ENCODE measurements at regions of chr5 and their contacts with region 1.

Region 1: DNA sequence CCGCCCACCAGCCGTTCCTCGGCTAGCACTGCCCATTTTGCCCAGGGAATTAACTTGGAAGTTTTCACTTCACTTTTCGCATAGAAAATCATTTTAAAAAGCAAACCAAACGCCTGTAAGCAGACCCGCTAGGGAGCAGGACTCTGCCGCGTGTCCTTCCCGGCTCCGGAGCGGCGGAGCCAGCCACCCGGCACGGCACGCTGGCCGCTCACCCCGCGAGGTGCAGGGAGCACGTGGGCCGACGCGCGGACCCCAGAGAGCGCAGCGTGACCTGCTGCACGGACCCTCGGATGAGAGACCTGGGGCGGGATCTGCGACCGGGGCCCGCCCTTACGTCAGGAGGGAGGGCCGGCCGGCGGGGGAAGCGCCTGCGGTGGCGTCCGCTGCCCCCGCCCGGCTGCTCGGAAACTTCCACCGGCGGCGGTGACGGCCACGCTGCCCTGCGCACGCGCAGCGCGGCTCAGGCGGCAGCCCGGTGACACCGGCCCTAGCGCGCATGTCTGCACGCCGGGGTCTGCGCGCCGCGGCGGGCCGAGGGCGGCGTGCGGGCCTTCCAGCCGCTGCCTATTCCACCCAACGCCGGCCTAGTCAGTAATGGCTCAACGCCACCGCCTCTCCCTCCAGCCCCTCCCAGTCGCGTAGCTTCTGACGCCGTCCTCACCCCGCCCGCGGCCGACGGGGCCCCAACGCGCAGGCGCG is 506 bp upstream of the TENT4A start:
- DNase-seq: peak; percentile 98
- ATAC-seq: peak; percentile 79
- H3K4me3 Mint-ChIP-seq: peak overlapping the region; percentile 89
- H3K27ac Mint-ChIP-seq: peak overlapping the region; percentile 92
- H3K4me1 Mint-ChIP-seq: peaks cover 38% of the 10 kb centered on the region
- H3K27me3 Mint-ChIP-seq: no peaks in the 10 kb centered on the region
- CTCF ChIP-seq: no peak

Region 2: DNA sequence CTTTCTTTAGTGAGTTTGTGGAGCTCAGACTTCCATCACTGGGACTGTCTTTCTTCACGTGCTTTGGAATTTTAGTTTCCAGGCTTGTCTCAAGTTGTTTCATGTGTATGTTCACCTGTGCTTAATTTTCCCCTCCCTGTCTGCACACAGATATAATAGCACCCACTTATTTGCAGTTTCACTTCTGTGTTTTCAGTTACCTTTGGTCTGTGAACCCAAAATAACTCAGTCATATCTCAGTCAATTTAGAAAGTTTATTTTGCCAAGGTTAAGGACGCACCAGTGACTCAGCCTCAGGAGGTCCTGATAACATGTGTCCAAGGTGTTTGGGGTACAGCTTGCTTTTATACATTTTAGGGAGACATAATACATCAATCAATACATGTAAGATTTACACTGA is 959.9 kb before region 1 on chr5:
- CTCF ChIA-PET with region 1: no interaction called
- POLR2A ChIA-PET with region 1: no interaction called
- intact Hi-C with region 1: loop called (anchors 10 kb)
- DNase-seq: no peak
- ATAC-seq: peak; percentile 56
- H3K4me3 Mint-ChIP-seq: peak overlapping the region; percentile 42
- H3K27ac Mint-ChIP-seq: peak overlapping the region; percentile 88
- H3K4me1 Mint-ChIP-seq: peaks cover 80% of the 10 kb centered on the region
- H3K27me3 Mint-ChIP-seq: no peaks in the 10 kb centered on the region
- CTCF ChIP-seq: no peak

Region 3: GRCh38 chr5:6261668-6262067 is 451.1 kb before region 1 on chr5:
- CTCF ChIA-PET with region 1: no interaction called
- POLR2A ChIA-PET with region 1: no interaction called
- intact Hi-C with region 1: no loop called
- DNase-seq: no peak
- ATAC-seq: no peak
- H3K4me3 Mint-ChIP-seq: no peak overlapping the region
- H3K27ac Mint-ChIP-seq: no peak overlapping the region
- H3K4me1 Mint-ChIP-seq: no peaks in the 10 kb centered on the region
- H3K27me3 Mint-ChIP-seq: peaks cover 5% of the 10 kb centered on the region
- CTCF ChIP-seq: no peak

Region 4: DNA sequence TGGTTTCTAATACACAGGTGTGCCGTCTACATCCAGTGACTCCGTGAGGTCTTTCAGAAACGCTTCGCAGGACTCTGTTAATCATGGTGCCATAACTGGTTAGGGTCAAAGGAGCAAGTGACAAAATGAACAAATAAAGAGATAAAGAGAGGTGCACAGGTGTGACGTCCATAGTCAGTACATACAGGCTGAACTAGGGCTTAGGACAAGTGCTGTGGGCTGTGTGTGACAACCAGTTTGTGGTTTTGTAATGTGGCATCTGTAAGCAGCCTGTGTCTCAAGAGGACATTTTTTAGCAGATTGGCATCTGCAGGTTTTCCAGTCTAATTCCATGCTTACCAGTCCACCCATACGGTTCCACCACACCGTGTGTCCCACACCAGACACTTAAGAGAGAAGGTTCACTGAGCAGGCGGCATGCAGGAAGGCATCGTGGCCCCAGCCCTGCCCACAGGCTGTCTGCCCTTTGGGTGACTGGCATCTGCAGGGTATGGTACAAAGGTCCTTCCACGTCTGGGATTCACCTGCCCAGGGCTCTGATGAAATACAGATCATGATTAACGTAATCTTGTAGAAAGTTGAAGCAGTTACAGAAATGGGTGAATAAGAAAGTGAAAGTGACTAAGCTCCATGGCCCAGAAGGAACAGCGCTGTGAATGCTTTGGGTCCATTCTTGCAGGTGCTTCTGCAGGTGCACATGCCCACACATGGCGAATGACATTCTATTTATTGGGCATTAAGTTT is 52.6 kb before region 1 on chr5:
- CTCF ChIA-PET with region 1: interaction called, 3 read pairs
- POLR2A ChIA-PET with region 1: interaction called, 9 read pairs
- intact Hi-C with region 1: loop called (anchors 1 kb)
- DNase-seq: peak; percentile 35
- ATAC-seq: peak; percentile 78
- H3K4me3 Mint-ChIP-seq: peak overlapping the region; percentile 80
- H3K27ac Mint-ChIP-seq: peak overlapping the region; percentile 96
- H3K4me1 Mint-ChIP-seq: peaks cover 31% of the 10 kb centered on the region
- H3K27me3 Mint-ChIP-seq: no peaks in the 10 kb centered on the region
- CTCF ChIP-seq: no peak

Region 5: DNA sequence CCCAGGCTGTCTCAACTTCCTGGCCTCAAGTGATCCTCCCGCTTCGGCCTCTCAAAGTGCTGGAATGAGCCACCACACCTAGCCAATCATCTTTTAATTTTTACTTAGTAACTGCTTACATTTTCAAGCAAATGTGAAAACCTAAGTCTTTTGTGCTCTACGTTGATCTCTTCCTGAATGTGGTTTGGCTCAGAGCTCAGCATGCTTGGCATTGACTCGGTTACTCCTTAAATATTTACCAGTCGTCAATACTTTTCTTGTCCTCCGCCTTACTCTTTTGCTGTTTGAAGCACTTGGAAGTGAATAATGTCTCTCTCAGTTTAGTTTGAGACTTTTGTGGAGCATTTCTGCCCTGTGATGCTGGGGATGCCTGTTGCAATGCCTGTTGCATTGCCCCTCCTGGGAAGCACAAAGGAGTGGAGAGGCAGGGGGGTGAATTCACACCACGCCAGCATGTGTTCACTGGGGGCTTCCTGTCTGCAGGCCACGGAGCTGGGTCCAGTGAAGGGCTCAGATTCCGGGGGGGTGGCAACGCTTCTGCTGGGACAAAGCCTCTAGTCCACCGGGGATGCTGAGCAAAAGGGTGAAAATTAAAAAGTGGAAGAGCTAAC is 12.5 kb before region 1 on chr5:
- CTCF ChIA-PET with region 1: no interaction called
- POLR2A ChIA-PET with region 1: no interaction called
- intact Hi-C with region 1: no loop called
- DNase-seq: no peak
- ATAC-seq: no peak
- H3K4me3 Mint-ChIP-seq: no peak overlapping the region
- H3K27ac Mint-ChIP-seq: no peak overlapping the region
- H3K4me1 Mint-ChIP-seq: peaks cover 4% of the 10 kb centered on the region
- H3K27me3 Mint-ChIP-seq: peaks cover 34% of the 10 kb centered on the region
- CTCF ChIP-seq: no peak

Region 6: GRCh38 chr5:6737023-6737941 is 24.6 kb after region 1 on chr5:
- CTCF ChIA-PET with region 1: no interaction called
- POLR2A ChIA-PET with region 1: interaction called, 22 read pairs
- intact Hi-C with region 1: loop called (anchors 1 kb)
- DNase-seq: no peak
- ATAC-seq: peak; percentile 66
- H3K4me3 Mint-ChIP-seq: peak overlapping the region; percentile 60
- H3K27ac Mint-ChIP-seq: peak overlapping the region; percentile 88
- H3K4me1 Mint-ChIP-seq: peaks cover 60% of the 10 kb centered on the region
- H3K27me3 Mint-ChIP-seq: no peaks in the 10 kb centered on the region
- CTCF ChIP-seq: no peak

Region 7: DNA sequence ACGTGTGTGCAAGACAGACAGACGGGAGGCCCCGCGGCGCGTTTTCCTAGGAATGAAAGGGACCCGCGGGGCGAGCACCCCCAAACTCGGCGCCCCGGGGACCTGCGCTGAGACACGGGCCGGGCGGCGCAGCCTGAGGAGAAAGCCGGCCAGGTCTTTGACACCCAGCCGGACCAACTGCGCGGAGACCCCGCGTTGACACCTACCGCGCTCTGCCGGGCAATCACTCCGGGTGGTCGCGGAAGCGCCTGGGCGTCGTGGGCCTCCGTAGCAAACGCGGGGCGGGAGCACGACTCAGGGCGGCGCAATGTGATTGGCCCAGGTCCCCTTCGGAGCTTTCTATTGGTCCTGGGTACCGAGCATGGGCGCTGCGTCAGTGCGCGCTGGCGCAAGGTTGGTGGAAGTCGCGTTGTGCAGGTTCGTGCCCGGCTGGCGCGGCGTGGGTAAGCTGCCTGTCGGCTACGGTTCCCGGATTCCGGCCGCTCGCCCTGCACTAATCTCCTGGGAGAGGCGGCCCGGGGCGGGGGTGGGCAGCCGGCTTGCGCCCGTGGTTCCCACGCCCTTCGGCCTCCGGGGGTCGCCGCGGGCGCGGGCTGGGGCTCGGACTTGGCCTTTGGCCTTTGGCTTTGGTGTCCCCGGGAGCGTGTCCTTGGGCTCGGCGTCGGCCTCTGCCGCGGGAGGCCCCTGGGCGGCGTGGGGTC is 1156.2 kb after region 1 on chr5 and contains the starts of genes FASTKD3 and MTRR:
- CTCF ChIA-PET with region 1: no interaction called
- POLR2A ChIA-PET with region 1: no interaction called
- intact Hi-C with region 1: loop called (anchors 1 kb)
- DNase-seq: peak; percentile 80
- ATAC-seq: peak; percentile 99
- H3K4me3 Mint-ChIP-seq: peak within 1 kb of the TSS; percentile 89
- H3K27ac Mint-ChIP-seq: peak within 1 kb of the TSS; percentile 65
- H3K4me1 Mint-ChIP-seq: peaks cover 62% of the 10 kb centered on the region
- H3K27me3 Mint-ChIP-seq: no peaks in the 10 kb centered on the region
- CTCF ChIP-seq: no peak
- total RNA-seq, gene FASTKD3: 12.1 and 16.0 TPM in 2 replicates
- total RNA-seq, gene MTRR: 54.8 and 70.7 TPM in 2 replicates

Measured in activated B cell treated with CpG ODN at 0.5 μM for 24 hours (primary cell).